ENCODE measurements at regions of chr11 and their contacts with region 1.

Region 1: DNA sequence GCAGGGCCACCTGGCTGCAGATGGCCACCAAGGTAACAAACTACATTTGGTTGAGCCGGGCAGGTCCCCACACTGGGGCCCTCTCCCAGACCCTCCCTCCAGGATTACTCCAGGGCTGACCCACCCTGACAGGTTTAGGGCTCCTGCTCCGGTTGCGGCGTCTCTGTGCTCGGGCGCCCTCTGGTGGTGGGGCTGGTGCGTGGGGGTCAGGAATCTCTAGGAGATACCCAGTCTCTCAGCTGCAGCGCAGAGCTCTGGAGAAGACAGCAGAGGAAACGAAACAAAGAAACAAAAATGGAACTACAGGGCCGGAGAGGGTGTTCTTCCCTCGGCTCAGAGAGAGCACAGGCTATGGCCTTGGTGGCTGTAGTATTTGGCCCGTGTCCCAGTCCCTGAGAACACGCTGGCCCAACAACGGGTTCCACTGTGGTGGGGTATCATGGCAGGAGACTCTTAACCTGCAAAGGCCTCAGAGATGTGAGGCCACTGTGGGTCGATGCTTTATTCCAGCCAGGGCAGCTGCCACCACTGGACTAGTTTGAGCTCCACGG is 2.4 kb downstream of the C11orf96 start:
- DNase-seq: peak in 41 of 42 donors; percentile 50 to 91 (median 75)

Region 2: GRCh38 chr11:43547889-43548381 is 396.9 kb before region 1 on chr11:
- intact Hi-C with region 1: no loop called
- DNase-seq: peak in 40 of 42 donors; percentile 25 to 78 (median 57)

Region 3: DNA sequence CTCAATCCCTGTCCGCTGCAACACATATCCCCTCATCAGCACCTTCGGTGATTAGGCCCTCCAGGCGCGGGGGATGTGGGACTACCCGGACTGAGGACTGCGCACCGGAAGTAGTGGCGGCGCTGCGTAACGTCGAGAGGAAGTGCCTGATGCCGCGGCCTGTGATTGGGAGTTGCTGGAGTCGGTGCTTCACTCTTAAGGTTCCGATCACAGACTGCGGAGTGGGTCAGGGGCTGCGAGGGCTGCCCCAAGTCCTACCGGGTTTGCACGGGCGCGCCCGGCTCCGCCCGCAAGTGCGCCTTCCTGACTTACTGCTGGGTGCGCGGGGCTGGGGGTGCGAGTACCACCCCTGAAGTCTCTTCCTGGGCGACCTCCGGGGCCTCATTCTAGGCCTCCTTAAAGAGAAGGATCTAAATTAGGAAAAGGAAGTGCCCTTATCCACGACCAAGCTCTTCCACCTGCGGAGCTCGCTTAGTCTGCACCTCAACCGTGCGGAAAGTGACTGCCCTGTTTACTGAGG is 64.1 kb before region 1 on chr11 and contains the start of gene ALKBH3:
- intact Hi-C with region 1: loop called (anchors 5 kb)
- DNase-seq: peak; percentile 86 to 98 (median 93)

Region 4: DNA sequence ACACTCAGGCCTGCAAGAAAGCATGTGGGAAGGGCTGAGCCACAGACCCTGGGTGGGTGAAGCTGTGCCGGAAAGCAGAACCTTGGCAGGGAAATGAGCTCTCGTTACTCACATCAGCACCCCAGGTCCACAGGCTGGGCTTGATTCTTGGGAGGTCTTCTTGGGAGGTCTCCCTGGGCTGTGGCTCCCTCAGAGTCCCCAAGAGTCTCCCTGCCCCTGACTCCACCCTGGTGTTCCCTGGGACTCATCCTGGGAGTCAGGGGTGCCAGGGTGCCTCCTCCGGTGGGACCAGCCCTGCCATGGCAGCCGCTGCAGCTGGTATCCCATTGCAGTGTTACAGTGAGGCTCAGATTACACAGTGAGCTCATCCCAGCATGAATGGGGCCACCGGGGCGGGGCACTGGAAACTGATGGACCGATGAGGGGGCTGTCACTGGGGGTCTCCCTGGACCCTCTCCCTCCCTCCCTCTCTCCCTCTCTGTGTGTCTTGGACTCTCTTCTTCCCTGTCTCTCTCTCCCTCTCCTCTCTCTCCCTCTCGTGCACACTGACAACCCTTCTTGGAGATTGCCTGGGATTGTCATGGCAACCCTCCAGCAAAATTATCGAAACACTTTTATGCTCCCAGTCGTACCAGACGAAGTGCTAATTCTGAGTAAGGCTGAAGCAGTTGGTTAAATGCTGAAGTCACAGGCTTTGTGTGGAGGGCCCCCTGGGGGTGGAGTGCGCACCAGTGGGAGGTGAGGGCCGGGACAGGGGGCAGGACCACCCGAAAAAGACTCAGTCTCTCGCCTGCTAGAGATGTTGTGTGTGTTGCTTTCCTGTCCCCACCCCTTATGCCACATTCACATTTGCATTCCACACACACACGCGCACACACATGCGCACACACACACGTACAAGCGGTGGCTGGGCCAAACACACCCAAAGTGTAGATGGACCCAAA is 11.0 kb before region 1 on chr11:
- intact Hi-C with region 1: no loop called
- DNase-seq: peak in 20 of 42 donors; percentile 16 to 69 (median 46)

Region 5: GRCh38 chr11:44016131-44016530 is 71.3 kb after region 1 on chr11:
- intact Hi-C with region 1: no loop called
- DNase-seq: peak in 4 of 42 donors; percentile 11 to 43 (median 36)

Region 6: DNA sequence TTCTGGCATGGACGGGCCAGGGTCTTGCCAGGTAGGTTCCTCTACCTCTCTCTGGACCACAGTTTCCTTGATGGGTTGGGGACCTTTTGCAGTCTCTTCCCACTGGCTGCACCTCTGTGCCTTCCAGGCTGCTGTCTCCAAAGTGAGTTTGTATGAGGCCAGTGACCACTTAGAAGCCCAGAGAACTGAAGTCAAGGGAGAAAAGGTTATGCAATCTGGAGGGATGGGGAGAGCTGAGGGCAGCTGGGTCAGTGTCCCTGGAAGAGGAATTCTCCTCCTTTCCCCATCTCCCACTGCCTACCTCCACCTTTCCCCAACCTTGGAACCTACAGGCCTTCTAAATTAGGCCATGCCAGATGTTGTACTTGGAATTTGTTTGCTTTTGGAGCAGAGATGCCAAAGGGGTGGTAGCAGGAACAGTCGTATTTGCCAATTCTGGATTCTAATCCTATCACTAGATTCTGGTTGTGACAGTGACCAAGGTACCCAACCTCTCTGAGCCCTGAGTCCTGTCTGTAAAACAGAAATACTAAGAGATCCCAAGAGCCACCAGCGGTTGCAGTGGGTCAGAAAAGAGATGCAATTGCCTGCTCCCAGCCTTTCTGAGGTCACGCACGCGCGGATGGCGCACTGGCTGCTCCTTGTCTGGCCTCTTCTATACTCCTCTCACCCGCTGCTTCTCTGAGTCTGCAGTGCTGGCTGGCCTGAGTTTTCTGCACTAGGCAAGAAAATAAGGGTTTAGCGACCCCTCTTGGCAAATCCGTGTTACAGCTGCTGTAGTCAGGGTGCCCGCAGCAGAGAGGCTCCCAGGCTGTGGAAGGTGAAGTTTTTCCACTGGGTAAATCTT is 92.2 kb after region 1 on chr11:
- intact Hi-C with region 1: loop called (anchors 5 kb)
- DNase-seq: peak; percentile 72 to 96 (median 88)